Posterior vena cava (tissue), 2 donors: ENCODE measurements at regions of chr9 and their contacts with region 1.

Region 1: DNA sequence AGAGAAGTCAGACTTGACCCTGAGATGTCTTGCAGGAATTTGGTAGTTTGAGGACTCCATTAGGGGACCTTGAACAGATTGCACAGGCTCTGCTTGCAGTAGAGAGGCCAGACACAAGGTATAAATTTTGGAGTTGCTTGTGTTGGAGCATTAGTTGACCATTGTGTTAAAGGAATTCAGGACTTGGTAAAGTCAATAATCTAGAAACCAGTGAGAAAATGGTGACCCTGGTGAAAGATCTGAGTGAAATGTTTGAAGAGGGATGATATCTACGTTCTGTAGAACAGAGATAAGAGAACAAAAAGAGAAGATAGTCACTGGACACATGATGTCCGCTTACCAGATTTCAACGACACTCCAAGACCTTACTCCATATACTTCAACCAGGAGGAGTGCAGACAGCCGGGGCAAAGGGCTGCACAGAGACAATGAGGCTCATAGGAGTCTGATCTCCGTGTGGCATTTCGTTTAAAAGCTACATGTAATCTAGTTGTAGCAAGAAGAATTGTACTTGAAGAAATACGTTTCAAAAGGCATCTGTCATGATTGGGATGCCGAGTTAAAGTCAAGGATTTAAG is 13.2 kb downstream of the DNAJC25 start:
- DNase-seq: no peak

Region 2: GRCh38 chr9:111604054-111604615 is 40.1 kb before region 1 on chr9:
- intact Hi-C with region 1: loop called in 1 of 2 experiments (anchors 1 kb)
- DNase-seq: no peak

Region 3: GRCh38 chr9:111615928-111616327 is 28.4 kb before region 1 on chr9:
- intact Hi-C with region 1: no loop called
- DNase-seq: no peak